ENCODE measurements at regions of chr6 and their contacts with region 1.

Region 1: DNA sequence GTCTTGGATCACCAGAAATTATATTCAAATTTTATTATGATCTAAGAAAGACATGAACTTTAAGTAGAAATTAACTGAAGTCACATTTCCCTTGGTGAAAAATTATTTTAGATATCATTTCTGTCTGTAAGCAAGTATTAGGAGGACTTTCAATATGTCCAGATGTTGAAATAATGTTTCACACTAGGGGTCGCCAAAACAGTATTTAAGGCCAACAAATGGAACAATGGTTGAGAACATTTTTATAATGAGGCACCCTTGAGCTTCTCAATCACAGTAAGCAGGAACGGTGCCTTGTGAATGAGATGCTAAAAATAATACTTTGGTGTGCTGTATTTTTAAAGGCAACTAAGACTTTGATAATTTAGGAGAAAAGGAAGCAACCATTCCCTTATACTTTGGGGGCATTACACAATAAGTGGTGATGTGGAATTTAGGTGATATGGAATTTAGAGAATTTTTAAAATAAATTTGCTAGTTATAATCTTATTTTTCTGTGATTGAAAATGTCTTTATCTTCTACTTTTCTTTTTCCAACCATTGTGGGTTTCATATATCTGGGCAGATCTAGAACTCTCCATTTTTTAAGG is 9.6 kb upstream of the SF3B5 start:
- DNase-seq: no peak
- H3K4me3 ChIP-seq: no peak overlapping the region
- H3K27ac ChIP-seq: no peak overlapping the region
- H3K4me1 ChIP-seq: no peaks in the 10 kb centered on the region
- H3K27me3 ChIP-seq: no peaks in the 10 kb centered on the region
- CTCF ChIP-seq: peak; percentile 46 to 78 (median 56)
- POLR2A ChIP-seq: no peak

Region 2: GRCh38 chr6:144214622-144215401 is 109.8 kb after region 1 on chr6:
- intact Hi-C with region 1: loop called (anchors 5 kb)
- DNase-seq: no peak
- H3K4me3 ChIP-seq: peak overlapping the region in 3 of 4 donors; percentile 72 to 85 (median 75)
- H3K27ac ChIP-seq: peak overlapping the region; percentile 91 to 98 (median 94)
- H3K4me1 ChIP-seq: peaks cover 7 to 31% (median 11%) of the 10 kb centered on the region in 3 donors
- H3K27me3 ChIP-seq: no peaks in the 10 kb centered on the region
- CTCF ChIP-seq: no peak
- POLR2A ChIP-seq: no peak

Region 3: GRCh38 chr6:144343701-144344428 is 238.9 kb after region 1 on chr6:
- intact Hi-C with region 1: no loop called
- DNase-seq: no peak
- H3K4me3 ChIP-seq: peak overlapping the region; percentile 5 to 52 (median 26)
- H3K27ac ChIP-seq: peak overlapping the region; percentile 78 to 83 (median 82)
- H3K4me1 ChIP-seq: peaks cover 25 to 99% (median 73%) of the 10 kb centered on the region in 3 donors
- H3K27me3 ChIP-seq: no peaks in the 10 kb centered on the region
- CTCF ChIP-seq: no peak
- POLR2A ChIP-seq: no peak

Region 4: GRCh38 chr6:144415835-144416643 is 311.0 kb after region 1 on chr6:
- intact Hi-C with region 1: no loop called
- DNase-seq: no peak
- H3K4me3 ChIP-seq: no peak overlapping the region
- H3K27ac ChIP-seq: no peak overlapping the region
- H3K4me1 ChIP-seq: peaks cover 5 to 55% (median 9%) of the 10 kb centered on the region in 3 donors
- H3K27me3 ChIP-seq: no peaks in the 10 kb centered on the region
- CTCF ChIP-seq: no peak
- POLR2A ChIP-seq: no peak

Region 5: DNA sequence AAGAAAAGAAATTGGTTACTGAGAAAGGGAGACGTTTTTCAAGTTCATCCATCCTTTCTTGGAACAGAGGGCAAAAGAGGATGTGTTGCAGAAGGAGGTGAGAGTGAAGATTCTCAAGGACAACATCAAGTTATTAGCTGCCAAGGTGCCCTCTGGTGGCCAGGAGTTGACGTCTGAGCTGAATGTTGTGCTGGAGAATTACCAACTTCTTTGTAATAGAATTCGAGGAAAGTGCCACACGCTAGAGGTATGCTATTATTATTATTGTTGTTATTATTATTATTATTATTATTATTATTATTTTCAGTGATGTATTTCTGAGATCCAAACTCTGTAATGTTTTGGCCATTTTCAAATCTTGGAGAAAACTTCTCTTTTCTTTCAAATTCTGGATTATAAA is 377.1 kb after region 1 on chr6:
- intact Hi-C with region 1: loop called (anchors 5 kb)
- DNase-seq: no peak
- H3K4me3 ChIP-seq: no peak overlapping the region
- H3K27ac ChIP-seq: no peak overlapping the region
- H3K4me1 ChIP-seq: no peaks in the 10 kb centered on the region
- H3K27me3 ChIP-seq: no peaks in the 10 kb centered on the region
- CTCF ChIP-seq: peak in 5 of 6 experiments; percentile 62 to 70 (median 69)
- POLR2A ChIP-seq: no peak

Measured in esophagus squamous epithelium (tissue), 5 donors.